ENCODE measurements at regions of chr6 and their contacts with region 1.

Region 1: DNA sequence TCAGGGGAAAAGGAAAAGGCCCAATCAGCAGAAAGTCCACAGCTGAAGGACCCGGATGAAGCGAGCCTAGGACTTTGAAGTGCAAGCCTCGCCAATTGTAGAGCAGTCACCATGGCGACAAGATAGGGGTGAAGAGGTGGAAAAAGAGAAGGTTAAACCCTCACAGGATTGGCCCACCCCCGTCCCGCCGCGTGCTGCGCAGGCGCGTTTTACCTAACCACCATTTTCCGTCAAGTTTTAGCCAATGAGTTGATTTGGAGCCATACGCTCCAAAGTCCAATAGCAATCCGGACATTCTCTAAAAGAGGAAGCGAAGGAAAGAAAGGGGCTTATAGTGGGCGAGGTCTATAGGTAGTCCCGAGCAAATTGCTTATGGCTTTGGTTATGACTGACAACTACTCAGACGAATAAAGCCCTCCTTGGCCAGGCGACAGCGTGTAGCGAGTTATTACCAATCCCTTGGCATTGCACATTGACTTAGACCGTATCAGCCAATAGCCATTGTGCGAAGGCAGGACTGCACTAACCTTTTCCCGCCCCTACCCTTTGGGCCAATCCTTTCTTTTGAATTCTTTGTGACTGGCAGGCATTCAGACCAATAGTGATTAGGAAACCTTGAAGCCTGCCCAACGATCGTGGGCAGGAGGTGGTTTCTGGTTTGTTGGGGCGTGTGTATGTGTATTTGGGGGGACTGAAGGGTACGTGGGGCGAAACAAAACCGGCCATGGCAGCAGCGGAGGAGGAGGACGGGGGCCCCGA is at the start of gene RNF5:
- DNase-seq: peak; percentile 100
- ATAC-seq: peak; percentile 87
- H3K4me3 ChIP-seq: peak within 1 kb of the TSS; percentile 93 to 98
- H3K27ac ChIP-seq: peak within 1 kb of the TSS; percentile 74
- H3K4me1 ChIP-seq: peaks cover 24 to 46% of the 10 kb centered on the region in 2 experiments
- H3K27me3 ChIP-seq: no peaks in the 10 kb centered on the region
- CTCF ChIP-seq: no peak
- POLR2A ChIP-seq: no peak
- RAD21 ChIP-seq: no peak
- total RNA-seq, gene RNF5: 45.9 TPM

Region 2: GRCh38 chr6:31462964-31463870 is 714.8 kb before region 1 on chr6:
- CTCF ChIA-PET with region 1: no interaction called
- POLR2A ChIA-PET with region 1: no interaction called
- RAD21 ChIA-PET with region 1: no interaction called
- intact Hi-C with region 1: no loop called
- DNase-seq: peak; percentile 93
- ATAC-seq: peak; percentile 99
- H3K4me3 ChIP-seq: peak overlapping the region; percentile 39 to 56
- H3K27ac ChIP-seq: peak overlapping the region; percentile 18; the same call in 1 of the 2 replicates
- H3K4me1 ChIP-seq: peaks cover 8 to 20% of the 10 kb centered on the region in 2 experiments
- H3K27me3 ChIP-seq: no peaks in the 10 kb centered on the region
- CTCF ChIP-seq: no peak
- POLR2A ChIP-seq: peak; percentile 57
- RAD21 ChIP-seq: no peak

Region 3: GRCh38 chr6:32127717-32128592 is 50.0 kb before region 1 on chr6 and contains the start of gene ATF6B:
- CTCF ChIA-PET with region 1: no interaction called
- POLR2A ChIA-PET with region 1: interaction called, 5 read pairs
- RAD21 ChIA-PET with region 1: no interaction called
- intact Hi-C with region 1: loop called (anchors 1 kb)
- DNase-seq: peak; percentile 98
- ATAC-seq: peak; percentile 89
- H3K4me3 ChIP-seq: peak within 1 kb of the TSS; percentile 94 to 100
- H3K27ac ChIP-seq: peak within 1 kb of the TSS; percentile 92
- H3K4me1 ChIP-seq: peaks cover 24 to 31% of the 10 kb centered on the region in 2 experiments
- H3K27me3 ChIP-seq: no peaks in the 10 kb centered on the region
- CTCF ChIP-seq: no peak
- POLR2A ChIP-seq: no peak
- RAD21 ChIP-seq: no peak
- total RNA-seq, gene ATF6B: 63.9 TPM

Region 4: GRCh38 chr6:32190054-32190851 is 12.3 kb after region 1 on chr6 and contains the start of gene PBX2:
- CTCF ChIA-PET with region 1: interaction called, 10 read pairs
- POLR2A ChIA-PET with region 1: interaction called, 10 read pairs
- RAD21 ChIA-PET with region 1: no interaction called
- intact Hi-C with region 1: no loop called
- DNase-seq: peak; percentile 66
- ATAC-seq: peak; percentile 69
- H3K4me3 ChIP-seq: peak within 1 kb of the TSS; percentile 80 to 84
- H3K27ac ChIP-seq: peak within 1 kb of the TSS; percentile 81
- H3K4me1 ChIP-seq: peaks cover 22 to 63% of the 10 kb centered on the region in 2 experiments
- H3K27me3 ChIP-seq: no peaks in the 10 kb centered on the region
- CTCF ChIP-seq: no peak
- POLR2A ChIP-seq: peak; percentile 43
- RAD21 ChIP-seq: no peak
- total RNA-seq, gene PBX2: 79.0 TPM

Measured in HCT116 (cell line).